ENCODE measurements at regions of chr7 and their contacts with region 1.

Region 1: DNA sequence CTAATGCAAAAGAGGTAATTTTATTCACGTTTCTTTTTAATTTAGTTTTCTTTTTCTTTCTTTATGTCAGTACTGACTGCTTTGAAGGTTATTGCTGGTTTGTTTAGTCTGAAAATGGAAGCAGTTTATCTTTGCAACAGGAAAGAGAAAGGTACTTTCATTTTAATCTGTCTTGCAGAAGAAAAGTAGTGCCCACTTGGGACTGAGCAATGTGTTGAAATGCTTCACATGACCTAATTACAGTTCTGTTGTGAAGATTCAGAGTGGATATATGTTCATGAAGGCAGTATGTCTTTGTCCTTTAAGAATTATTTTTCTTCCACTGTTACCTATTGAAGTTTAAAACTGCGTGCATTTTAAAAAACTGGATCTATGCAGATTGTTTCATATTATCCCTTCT is 80.1 kb downstream of the ANKIB1 start:
- DNase-seq: no peak
- ATAC-seq: peak; percentile 38

Region 2: DNA sequence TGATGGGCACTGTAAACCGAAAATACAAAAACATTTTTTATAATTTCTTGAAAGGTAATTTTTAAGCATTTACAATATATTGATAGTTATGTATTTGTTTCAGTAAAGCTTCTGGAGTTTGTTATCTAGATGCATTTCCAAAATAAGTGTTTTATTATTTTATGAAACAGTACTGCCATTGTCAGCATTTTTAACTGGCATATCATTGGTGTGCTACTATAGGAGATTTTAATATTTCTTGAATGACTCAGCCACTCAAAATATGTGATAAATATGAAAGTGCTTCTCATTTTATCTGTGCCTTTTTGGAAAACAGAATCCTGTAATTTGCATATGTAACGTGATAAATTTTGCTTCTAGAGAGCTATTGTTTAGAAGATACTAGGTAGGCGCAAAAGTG is 17.9 kb after region 1 on chr7:
- intact Hi-C with region 1: no loop called
- DNase-seq: no peak
- ATAC-seq: no peak

Region 3: GRCh38 chr7:92547579-92547978 is 221.7 kb after region 1 on chr7:
- intact Hi-C with region 1: loop called (anchors 5 kb)
- DNase-seq: no peak
- ATAC-seq: peak; percentile 58

Measured in sciatic nerve (tissue), 2 donors.